ENCODE measurements at regions of chr22 and their contacts with region 1.

Region 1: GRCh38 chr22:24996420-24996952 is 44.0 kb downstream of the KIAA1671 start:
- DNase-seq: peak; percentile 45 to 63 (median 62)
- ATAC-seq: peak; percentile 73 to 75
- H3K4me3 ChIP-seq: no peak overlapping the region
- H3K27ac ChIP-seq: no peak overlapping the region
- H3K4me1 ChIP-seq: peaks cover 11% of the 10 kb centered on the region
- H3K27me3 ChIP-seq: no peaks in the 10 kb centered on the region

Region 2: GRCh38 chr22:24951942-24952836 is 44.3 kb before region 1 on chr22 and contains the start of gene KIAA1671:
- intact Hi-C with region 1: loop called in 1 of 4 experiments (anchors 5 kb)
- DNase-seq: peak; percentile 89 to 96 (median 95)
- ATAC-seq: peak; percentile 95 to 97
- H3K4me3 ChIP-seq: peak within 1 kb of the TSS; percentile 61
- H3K27ac ChIP-seq: peak within 1 kb of the TSS; percentile 52
- H3K4me1 ChIP-seq: no peaks in the 10 kb centered on the region
- H3K27me3 ChIP-seq: no peaks in the 10 kb centered on the region
- total RNA-seq, gene KIAA1671: 17.3 to 24.0 (median 20.3) TPM

Region 3: DNA sequence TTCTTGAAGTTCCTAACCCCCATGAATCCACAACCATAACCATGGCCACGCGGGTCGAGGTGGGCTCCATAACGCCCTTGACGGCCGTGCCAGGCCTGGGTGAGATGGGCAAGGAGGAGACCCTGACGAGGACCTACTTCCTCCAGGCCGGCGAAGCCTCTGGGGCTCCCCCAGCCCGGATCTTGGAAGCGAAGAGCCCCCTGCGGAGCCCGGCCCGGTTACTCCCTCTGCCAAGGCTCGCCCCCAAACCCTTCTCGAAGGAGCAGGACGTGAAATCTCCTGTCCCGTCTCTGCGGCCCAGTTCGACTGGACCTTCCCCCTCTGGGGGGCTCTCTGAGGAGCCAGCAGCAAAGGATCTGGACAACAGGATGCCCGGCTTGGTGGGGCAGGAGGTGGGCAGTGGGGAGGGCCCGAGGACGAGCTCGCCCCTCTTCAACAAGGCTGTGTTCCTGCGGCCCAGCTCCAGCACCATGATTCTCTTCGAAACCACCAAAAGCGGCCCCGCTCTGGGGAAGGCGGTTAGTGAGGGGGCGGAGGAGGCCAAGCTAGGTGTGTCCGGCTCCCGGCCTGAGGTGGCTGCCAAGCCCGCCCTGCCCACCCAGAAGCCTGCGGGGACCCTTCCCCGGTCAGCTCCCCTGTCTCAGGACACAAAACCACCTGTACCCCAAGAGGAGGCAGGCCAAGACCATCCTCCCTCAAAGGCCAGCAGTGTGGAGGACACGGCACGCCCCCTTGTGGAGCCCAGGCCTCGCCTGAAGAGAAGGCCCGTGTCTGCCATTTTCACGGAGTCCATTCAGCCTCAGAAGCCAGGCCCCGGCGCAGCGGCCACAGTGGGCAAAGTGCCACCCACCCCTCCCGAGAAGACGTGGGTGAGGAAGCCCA is 31.7 kb after region 1 on chr22:
- intact Hi-C with region 1: loop called in 1 of 4 experiments (anchors 5 kb)
- DNase-seq: peak; percentile 57 to 83 (median 81)
- ATAC-seq: peak; percentile 36 to 40
- H3K4me3 ChIP-seq: no peak overlapping the region
- H3K27ac ChIP-seq: no peak overlapping the region
- H3K4me1 ChIP-seq: peaks cover 9% of the 10 kb centered on the region
- H3K27me3 ChIP-seq: no peaks in the 10 kb centered on the region

Region 4: DNA sequence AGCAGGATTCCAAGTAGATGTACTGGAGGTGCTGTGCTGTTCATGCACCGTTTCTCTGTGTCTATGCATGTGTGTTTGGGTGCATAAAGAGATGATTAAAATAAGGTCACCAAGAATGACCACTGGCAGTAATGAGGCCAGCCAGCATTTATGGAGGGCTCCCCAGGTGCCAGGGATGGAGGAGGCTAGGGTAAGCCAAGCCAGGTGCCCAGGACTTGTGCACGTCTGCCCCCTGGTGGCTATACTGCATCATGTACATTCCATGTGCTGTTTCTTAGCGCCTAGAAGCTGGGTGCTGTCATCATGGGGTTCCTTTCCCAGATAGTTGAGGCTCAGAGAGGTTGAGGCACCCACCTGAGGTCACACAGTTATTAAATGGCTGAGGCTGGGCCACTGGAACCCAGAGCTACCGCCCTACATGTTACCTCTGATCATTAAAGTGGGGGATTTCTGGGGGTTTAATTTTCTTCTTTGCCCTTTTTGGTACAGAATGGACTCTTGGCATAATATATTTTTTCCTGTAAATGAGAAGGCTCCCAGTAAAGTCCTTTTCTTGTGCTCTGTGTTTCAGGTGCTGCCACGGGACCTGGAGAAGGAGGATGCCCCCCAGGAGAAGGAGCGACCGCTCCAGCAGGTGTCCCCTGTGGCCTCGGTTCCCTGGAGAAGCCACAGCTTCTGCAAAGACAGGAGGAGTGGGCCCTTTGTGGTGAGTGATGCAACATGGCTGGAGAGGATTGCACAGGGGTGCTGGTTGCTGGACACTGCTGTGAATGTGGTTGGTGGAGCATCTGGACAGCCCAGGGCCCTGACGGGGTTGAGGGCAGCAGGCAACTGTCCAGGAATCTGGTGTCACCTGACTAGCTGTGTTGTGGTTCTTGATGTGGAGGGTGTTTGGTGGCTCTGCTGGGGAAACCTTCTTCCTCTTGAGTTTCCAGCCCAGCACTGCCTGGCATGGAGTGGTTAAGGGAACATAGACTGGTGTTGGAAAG is 52.5 kb after region 1 on chr22:
- intact Hi-C with region 1: loop called in 1 of 4 experiments (anchors 10 kb)
- DNase-seq: peak; percentile 73 to 82 (median 78)
- ATAC-seq: peak; percentile 77 to 81
- H3K4me3 ChIP-seq: no peak overlapping the region
- H3K27ac ChIP-seq: no peak overlapping the region
- H3K4me1 ChIP-seq: no peaks in the 10 kb centered on the region
- H3K27me3 ChIP-seq: no peaks in the 10 kb centered on the region

Region 5: DNA sequence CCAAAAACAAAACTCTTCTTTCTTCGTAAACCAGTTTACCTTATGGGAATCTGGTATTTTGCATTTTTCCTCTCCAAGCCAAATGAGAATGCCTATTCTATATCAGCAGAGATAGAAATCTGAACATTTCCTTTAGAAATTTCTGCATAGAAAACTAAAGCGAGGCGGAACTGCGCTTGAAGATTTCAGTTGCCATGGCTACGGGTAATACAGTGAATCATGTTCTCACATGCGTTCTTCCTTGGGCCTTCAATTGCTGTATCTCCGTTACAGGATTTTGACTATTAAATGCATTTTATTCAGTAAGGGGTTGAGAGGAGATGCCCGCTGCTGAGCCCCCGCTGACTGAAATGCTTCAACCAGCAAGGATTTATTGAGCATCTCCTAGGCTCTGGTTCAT is 95.0 kb after region 1 on chr22:
- intact Hi-C with region 1: no loop called
- DNase-seq: no peak
- ATAC-seq: no peak
- H3K4me3 ChIP-seq: no peak overlapping the region
- H3K27ac ChIP-seq: no peak overlapping the region
- H3K4me1 ChIP-seq: peaks cover 13% of the 10 kb centered on the region
- H3K27me3 ChIP-seq: no peaks in the 10 kb centered on the region

Measured in right cardiac atrium (tissue), 5 donors.